WTC11 (cell line): ENCODE measurements at regions of chr2 and their contacts with region 1.

Region 1: GRCh38 chr2:182980115-182980514 is 58.1 kb downstream of the NCKAP1 start:
- DNase-seq: no peak
- ATAC-seq: peak; percentile 43; the same call in 1 of the 2 replicates
- H3K4me3 Mint-ChIP-seq: no peak overlapping the region
- H3K27ac Mint-ChIP-seq: no peak overlapping the region
- H3K4me1 Mint-ChIP-seq: no peaks in the 10 kb centered on the region
- H3K27me3 Mint-ChIP-seq: no peaks in the 10 kb centered on the region
- CTCF ChIP-seq: no peak; the same call in 1 of the 2 replicates

Region 2: DNA sequence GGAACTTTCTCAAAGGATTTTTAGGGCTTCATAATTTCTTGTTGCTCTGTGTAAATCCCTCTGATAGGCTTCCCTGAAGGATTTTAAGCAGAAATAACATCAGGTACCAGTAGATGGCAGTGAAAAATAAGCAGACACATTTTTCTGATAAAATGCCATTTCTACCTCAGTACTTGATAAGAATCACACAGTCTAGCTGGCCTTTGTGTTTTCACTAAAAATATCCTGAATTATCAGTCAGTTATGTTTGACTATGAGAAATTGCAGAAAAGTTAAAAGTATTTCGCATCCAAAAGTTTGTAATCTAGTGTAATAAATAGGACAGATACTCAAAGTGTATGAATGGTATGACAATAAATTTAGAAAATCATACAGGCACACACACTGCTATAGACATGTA is 195.3 kb before region 1 on chr2:
- CTCF ChIA-PET with region 1: interaction called, 20 read pairs
- POLR2A ChIA-PET with region 1: no interaction called
- DNase-seq: no peak
- ATAC-seq: peak; percentile 70
- H3K4me3 Mint-ChIP-seq: no peak overlapping the region
- H3K27ac Mint-ChIP-seq: no peak overlapping the region
- H3K4me1 Mint-ChIP-seq: peaks cover 3% of the 10 kb centered on the region; the same call in 1 of the 2 replicates
- H3K27me3 Mint-ChIP-seq: no peaks in the 10 kb centered on the region
- CTCF ChIP-seq: 0 out of 2 replicates have a peak, but pooled peaks have one; percentile 26

Region 3: DNA sequence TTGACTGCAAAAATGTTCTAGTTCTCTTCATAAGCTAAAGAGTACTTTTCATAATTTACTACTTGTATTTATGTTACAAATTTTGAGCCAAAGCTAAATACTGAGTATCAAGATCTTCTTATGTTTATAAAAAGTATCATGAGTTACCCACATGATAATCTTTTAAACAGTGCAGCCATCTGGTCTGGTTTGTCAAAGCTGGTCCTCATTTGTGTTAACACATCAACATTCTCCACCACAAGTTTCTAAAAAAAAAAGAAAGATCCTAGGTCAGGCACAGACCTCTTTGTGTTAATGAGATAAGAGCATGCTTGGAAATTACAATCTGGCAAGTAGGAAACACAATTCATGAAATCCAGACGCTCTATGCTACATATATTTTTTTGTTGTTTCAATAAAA is 38.2 kb before region 1 on chr2:
- CTCF ChIA-PET with region 1: no interaction called
- POLR2A ChIA-PET with region 1: no interaction called
- DNase-seq: no peak
- ATAC-seq: no peak
- H3K4me3 Mint-ChIP-seq: no peak overlapping the region
- H3K27ac Mint-ChIP-seq: no peak overlapping the region
- H3K4me1 Mint-ChIP-seq: no peaks in the 10 kb centered on the region
- H3K27me3 Mint-ChIP-seq: no peaks in the 10 kb centered on the region
- CTCF ChIP-seq: no peak